ENCODE measurements at regions of chr11 and their contacts with region 1.

Region 1: DNA sequence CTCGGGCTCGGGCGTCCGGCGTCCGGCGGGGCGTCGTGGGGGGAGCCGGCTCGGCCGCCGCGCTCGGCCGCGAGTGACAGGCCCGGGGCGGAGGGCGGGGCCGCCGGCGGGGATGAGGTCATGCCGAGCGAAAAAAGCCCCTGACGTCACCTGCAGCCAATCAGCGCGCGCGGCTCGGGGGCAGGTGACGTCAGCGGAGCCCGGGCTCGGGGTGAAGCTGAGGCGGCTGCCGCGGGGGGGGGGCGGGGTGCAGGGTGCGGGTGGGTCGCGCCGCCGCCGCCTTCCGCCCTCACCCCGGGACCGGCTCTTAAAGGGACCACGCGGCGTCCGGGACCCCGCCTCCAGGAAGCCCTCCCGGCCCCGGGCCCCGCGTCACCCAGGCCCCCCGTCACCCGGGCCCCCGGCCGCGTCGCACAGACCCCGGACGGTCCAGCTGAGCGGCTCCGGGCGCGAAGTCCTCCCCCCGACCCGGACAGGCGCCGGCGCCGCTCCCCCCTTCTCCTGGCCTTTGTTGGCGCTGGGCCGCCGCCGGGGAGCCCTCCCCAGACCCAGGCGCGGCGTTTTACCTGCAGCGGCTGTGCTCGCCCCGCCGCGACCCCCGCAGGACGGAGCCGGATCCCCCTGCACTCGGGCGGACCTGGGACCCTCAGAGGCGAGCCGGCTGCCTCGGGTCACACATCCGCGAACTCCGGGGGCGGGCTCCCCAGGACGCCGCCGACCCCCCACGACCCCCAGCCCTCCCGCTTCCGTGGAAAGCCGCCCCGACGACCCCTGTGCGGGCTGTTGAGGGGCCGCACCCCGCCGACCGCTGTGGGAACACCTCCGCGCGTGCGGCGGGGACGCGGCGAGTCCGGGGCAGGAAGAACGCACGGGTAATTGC is at the start of gene DUSP8:
- DNase-seq: peak; percentile 92
- ATAC-seq: peak; percentile 70
- H3K4me3 Mint-ChIP-seq: no peak within 1 kb of the TSS
- H3K27ac Mint-ChIP-seq: no peak within 1 kb of the TSS
- H3K4me1 Mint-ChIP-seq: peaks cover 15% of the 10 kb centered on the region
- H3K27me3 Mint-ChIP-seq: peaks cover 32% of the 10 kb centered on the region
- total RNA-seq, gene DUSP8: 0.13 TPM

Region 2: GRCh38 chr11:1202776-1203504 is 369.5 kb before region 1 on chr11:
- CTCF ChIA-PET with region 1: interaction called, 14 read pairs
- POLR2A ChIA-PET with region 1: no interaction called
- DNase-seq: peak; percentile 63
- ATAC-seq: peak; percentile 77
- H3K4me3 Mint-ChIP-seq: no peak overlapping the region
- H3K27ac Mint-ChIP-seq: no peak overlapping the region
- H3K4me1 Mint-ChIP-seq: no peaks in the 10 kb centered on the region
- H3K27me3 Mint-ChIP-seq: no peaks in the 10 kb centered on the region

Region 3: DNA sequence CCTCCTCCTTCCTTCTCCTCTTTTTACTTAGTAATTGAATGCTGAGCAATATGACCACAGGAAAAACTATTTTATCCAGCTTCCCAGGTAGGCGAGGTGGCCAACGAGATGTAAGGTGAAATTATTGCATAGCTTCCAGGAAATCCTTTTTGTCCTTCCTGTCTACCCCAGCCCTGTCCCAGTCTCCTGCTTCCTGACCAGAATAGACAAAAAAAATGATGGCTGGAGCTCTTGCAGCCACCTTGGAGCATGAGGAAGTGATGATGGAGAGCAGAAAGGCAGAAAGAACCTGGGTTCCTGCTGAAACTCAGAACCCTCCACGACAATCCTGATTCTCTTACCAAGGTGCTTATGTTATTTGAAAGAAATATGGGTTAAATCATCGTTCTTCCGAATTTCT is 34.3 kb before region 1 on chr11:
- CTCF ChIA-PET with region 1: interaction called, 13 read pairs
- POLR2A ChIA-PET with region 1: no interaction called
- DNase-seq: no peak
- ATAC-seq: no peak
- H3K4me3 Mint-ChIP-seq: no peak overlapping the region
- H3K27ac Mint-ChIP-seq: no peak overlapping the region
- H3K4me1 Mint-ChIP-seq: no peaks in the 10 kb centered on the region
- H3K27me3 Mint-ChIP-seq: peaks cover 3% of the 10 kb centered on the region

Region 4: DNA sequence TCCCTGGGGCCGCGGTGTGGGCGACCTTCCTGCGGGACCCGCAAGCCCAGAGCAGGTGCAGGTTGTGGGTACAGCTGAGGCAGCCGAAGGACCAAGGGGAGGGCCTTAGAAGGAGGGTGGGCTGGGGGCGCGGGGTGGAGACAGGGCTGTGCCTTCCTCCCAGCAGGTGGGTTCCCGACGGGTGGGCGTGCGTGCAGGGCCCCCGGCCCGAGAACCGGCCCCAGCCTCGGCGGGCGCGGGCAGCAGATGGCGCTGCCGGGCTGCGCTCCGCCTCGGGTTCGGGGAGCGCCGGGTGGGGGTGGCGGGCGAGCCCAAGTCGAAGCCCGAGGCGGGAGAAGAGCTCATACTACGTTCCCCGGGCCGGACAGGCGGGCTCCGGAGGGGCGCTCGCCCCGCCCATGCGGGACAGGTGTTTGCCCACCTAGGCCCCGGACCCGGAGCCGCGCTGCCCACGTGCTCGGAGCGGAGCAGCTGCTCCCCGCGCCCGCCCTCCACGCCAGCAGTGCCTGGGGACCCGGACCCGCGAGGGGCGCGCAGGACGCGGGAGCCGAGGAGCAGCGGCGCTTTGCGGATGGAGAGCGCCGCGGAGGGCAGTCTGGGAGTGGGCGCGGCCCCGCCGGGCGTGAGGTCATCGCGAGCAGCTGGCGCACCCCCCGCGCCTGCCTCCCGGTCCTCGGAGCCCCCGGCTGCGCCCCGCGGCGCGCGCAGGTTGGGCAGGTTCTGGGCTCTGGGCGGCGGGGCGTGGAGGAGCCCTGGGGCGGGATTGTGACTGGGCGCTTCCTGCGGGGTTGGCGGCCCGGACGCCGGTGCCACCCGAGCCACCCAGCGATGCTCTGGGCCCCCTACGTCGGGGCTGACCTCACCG is 25.7 kb before region 1 on chr11:
- CTCF ChIA-PET with region 1: interaction called, 48 read pairs
- POLR2A ChIA-PET with region 1: no interaction called
- DNase-seq: peak; percentile 32
- ATAC-seq: peak; percentile 59
- H3K4me3 Mint-ChIP-seq: no peak overlapping the region
- H3K27ac Mint-ChIP-seq: no peak overlapping the region
- H3K4me1 Mint-ChIP-seq: peaks cover 4% of the 10 kb centered on the region
- H3K27me3 Mint-ChIP-seq: peaks cover 29% of the 10 kb centered on the region

Region 5: GRCh38 chr11:1589996-1590395 is 17.6 kb after region 1 on chr11:
- CTCF ChIA-PET with region 1: interaction called, 29 read pairs
- POLR2A ChIA-PET with region 1: interaction called, 3 read pairs
- DNase-seq: no peak
- ATAC-seq: no peak
- H3K4me3 Mint-ChIP-seq: no peak overlapping the region
- H3K27ac Mint-ChIP-seq: peak overlapping the region; percentile 46
- H3K4me1 Mint-ChIP-seq: peaks cover 13% of the 10 kb centered on the region
- H3K27me3 Mint-ChIP-seq: peaks cover 22% of the 10 kb centered on the region

Region 6: DNA sequence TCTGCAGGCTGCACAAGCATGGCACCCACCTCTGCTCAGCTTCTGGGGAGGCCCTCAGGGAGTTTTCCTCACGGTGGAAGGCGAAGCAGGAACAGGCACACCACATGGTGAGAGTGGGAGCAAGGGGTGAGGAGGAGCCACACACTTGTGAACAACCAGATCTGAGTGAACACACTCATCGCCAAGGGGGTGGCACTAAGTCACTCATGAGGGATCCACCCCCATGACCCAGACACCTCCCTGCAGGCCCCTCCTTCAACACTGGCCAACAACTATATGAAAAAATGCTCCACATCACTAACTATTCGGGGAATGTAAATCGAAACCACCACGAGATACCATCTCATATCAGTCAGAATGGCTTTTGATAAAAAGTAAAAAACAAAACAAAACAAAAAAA is 26.4 kb after region 1 on chr11:
- CTCF ChIA-PET with region 1: interaction called, 23 read pairs
- POLR2A ChIA-PET with region 1: no interaction called
- DNase-seq: no peak
- ATAC-seq: no peak
- H3K4me3 Mint-ChIP-seq: no peak overlapping the region
- H3K27ac Mint-ChIP-seq: no peak overlapping the region
- H3K4me1 Mint-ChIP-seq: no peaks in the 10 kb centered on the region
- H3K27me3 Mint-ChIP-seq: peaks cover 46% of the 10 kb centered on the region